ENCODE measurements at regions of chr3 and their contacts with region 1.

Region 1: DNA sequence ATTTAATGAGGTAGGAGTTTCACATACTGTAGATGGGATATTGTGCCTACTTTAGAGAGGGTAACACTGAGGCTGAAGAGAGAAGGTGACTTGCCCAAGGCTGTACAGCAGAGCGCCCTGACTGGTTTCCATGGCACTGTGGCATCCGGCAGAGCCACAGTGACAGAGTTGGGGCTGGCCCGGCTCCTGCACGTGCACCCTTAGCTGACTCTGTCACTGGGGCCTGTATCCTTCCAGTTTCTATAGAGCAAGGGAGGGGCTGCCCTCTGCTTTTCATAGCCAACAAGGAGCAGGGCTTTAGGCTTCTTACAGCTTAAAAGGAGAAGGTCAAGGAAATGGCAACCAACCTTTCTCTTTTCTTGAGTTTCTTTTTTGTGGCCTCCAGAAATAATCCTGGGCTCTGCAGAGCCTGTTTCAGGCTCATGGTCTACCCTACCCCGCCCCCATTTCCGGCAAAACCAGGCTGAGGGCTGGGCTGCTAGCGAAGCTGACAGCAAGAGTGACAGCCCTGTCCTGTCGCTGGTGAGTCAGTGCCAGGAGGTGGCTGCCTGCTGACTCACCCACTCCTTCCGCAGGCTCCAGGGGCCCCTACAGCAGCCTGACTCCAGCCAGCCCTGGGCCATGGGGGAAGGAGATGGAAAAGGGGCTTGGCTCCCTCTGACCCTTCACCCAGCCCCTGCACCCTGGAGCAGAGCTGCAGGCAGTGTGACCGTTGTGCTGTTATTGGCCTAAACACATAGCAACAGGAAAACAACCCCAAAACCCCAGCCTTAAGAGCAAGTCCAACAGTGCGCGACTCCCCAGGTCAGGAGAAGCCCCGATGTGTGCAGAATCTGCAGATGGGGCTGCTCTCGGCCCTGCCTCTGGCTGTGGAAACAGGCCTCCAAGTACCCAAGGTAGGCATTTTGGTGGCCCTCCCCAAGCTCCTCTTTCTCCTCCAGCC is 29.8 kb downstream of the SLC6A6 start:
- DNase-seq: peak; percentile 97
- H3K4me3 Mint-ChIP-seq: peak overlapping the region; percentile 77
- H3K27ac Mint-ChIP-seq: peak overlapping the region; percentile 92
- H3K4me1 Mint-ChIP-seq: peaks cover 80% of the 10 kb centered on the region
- H3K27me3 Mint-ChIP-seq: no peaks in the 10 kb centered on the region

Region 2: GRCh38 chr3:13012228-13012691 is 1419.9 kb before region 1 on chr3:
- CTCF ChIA-PET with region 1: no interaction called
- POLR2A ChIA-PET with region 1: no interaction called
- intact Hi-C with region 1: loop called (anchors 10 kb)
- DNase-seq: peak; percentile 83
- H3K4me3 Mint-ChIP-seq: peak overlapping the region; percentile 70
- H3K27ac Mint-ChIP-seq: peak overlapping the region; percentile 93
- H3K4me1 Mint-ChIP-seq: peaks cover 80% of the 10 kb centered on the region
- H3K27me3 Mint-ChIP-seq: no peaks in the 10 kb centered on the region

Region 3: GRCh38 chr3:13822042-13822441 is 610.1 kb before region 1 on chr3:
- CTCF ChIA-PET with region 1: no interaction called
- POLR2A ChIA-PET with region 1: no interaction called
- intact Hi-C with region 1: no loop called
- DNase-seq: peak; percentile 29
- H3K4me3 Mint-ChIP-seq: no peak overlapping the region
- H3K27ac Mint-ChIP-seq: peak overlapping the region; percentile 43
- H3K4me1 Mint-ChIP-seq: peaks cover 9% of the 10 kb centered on the region
- H3K27me3 Mint-ChIP-seq: no peaks in the 10 kb centered on the region

Region 4: GRCh38 chr3:14178247-14179113 is 253.7 kb before region 1 on chr3 and contains the starts of genes LSM3 and XPC:
- CTCF ChIA-PET with region 1: no interaction called
- POLR2A ChIA-PET with region 1: interaction called, 4 read pairs
- intact Hi-C with region 1: loop called (anchors 2 kb)
- DNase-seq: peak; percentile 98
- H3K4me3 Mint-ChIP-seq: peak within 1 kb of the TSS; percentile 87
- H3K27ac Mint-ChIP-seq: peak within 1 kb of the TSS; percentile 89
- H3K4me1 Mint-ChIP-seq: peaks cover 63% of the 10 kb centered on the region
- H3K27me3 Mint-ChIP-seq: no peaks in the 10 kb centered on the region
- total RNA-seq, gene LSM3: 22.1 to 22.9 TPM
- total RNA-seq, gene XPC: 27.8 to 31.6 TPM

Region 5: DNA sequence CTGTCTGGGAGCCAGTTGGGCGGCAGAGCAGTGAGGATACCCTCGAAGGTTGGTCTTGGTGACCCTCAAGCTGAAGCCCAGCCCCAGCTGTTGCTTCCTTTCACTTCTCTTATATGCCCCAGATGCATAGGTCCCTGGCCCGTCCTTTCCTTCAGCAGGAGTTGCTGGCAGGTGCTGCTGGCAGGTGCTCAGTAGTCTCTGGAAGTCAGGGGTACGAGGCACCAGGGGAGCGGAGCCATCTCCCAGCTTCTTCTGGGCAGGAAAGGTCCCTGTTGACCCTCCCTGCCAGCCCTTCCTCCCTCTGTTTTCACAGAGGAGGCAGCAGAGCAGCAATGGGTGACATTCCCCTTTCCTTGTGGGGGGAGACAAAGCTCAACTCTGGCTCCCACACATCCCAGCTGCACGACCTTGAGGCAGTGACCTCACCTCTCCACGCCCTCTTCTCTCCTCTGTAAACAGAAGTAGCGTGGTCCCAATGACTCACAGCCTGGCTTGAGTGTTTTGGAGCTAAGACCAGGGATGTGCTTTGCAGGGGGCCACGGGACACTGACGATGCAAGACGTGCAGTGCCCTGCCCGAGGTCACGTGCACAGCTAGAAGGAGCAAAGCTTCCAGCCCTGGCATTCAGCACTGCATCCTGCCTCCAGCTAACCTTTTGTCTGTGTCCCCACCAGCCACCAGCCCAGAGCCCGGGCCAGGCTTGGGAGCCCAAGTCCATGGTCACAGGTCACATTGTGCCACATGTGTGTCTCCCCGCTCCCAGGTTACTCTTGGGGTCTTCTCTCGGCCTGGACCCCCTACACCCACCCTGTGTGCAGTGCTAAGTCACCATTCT is 19.9 kb after region 1 on chr3:
- CTCF ChIA-PET with region 1: no interaction called
- POLR2A ChIA-PET with region 1: no interaction called
- intact Hi-C with region 1: loop called (anchors 2 kb)
- DNase-seq: no peak
- H3K4me3 Mint-ChIP-seq: no peak overlapping the region
- H3K27ac Mint-ChIP-seq: no peak overlapping the region
- H3K4me1 Mint-ChIP-seq: peaks cover 6% of the 10 kb centered on the region
- H3K27me3 Mint-ChIP-seq: no peaks in the 10 kb centered on the region

Region 6: DNA sequence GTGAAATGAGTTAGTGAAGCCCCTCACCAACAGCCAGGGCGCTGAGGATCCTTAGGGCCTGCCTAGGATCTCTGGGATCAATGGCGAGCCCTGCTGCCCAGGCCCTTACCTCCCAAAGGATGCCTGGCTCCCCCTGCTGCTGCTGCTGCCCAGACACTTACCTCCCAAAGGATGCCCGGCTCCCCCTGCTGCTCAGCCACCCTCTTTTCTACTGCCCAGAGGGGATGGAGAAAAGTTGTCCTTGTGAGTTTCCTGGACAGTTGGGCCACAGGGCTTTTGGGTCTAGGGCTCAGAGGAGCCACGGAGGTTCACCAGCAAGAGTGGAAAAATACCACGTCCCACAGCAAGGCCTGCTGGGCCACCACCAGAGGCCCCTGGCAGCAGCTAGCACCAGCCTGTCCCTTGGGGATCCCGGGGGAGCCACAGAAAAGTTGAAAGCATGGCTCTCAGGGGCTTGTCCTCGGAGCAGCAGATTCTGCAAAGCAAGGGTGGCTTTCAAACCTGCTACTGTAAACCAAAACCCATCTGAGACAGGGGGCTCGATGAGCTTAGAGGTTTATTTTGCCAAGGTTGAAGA is 29.7 kb after region 1 on chr3:
- CTCF ChIA-PET with region 1: interaction called, 9 read pairs
- POLR2A ChIA-PET with region 1: interaction called, 22 read pairs
- intact Hi-C with region 1: loop called (anchors 1 kb)
- DNase-seq: peak; percentile 58
- H3K4me3 Mint-ChIP-seq: no peak overlapping the region
- H3K27ac Mint-ChIP-seq: peak overlapping the region; percentile 65
- H3K4me1 Mint-ChIP-seq: peaks cover 35% of the 10 kb centered on the region
- H3K27me3 Mint-ChIP-seq: no peaks in the 10 kb centered on the region

Region 7: GRCh38 chr3:14651440-14652251 is 219.5 kb after region 1 on chr3 and contains the start of gene CCDC174:
- CTCF ChIA-PET with region 1: no interaction called
- POLR2A ChIA-PET with region 1: no interaction called
- intact Hi-C with region 1: loop called (anchors 1 kb)
- DNase-seq: peak; percentile 97
- H3K4me3 Mint-ChIP-seq: peak within 1 kb of the TSS; percentile 89
- H3K27ac Mint-ChIP-seq: peak within 1 kb of the TSS; percentile 98
- H3K4me1 Mint-ChIP-seq: peaks cover 35% of the 10 kb centered on the region
- H3K27me3 Mint-ChIP-seq: no peaks in the 10 kb centered on the region
- total RNA-seq, gene CCDC174: 16.6 to 18.6 TPM

Region 8: DNA sequence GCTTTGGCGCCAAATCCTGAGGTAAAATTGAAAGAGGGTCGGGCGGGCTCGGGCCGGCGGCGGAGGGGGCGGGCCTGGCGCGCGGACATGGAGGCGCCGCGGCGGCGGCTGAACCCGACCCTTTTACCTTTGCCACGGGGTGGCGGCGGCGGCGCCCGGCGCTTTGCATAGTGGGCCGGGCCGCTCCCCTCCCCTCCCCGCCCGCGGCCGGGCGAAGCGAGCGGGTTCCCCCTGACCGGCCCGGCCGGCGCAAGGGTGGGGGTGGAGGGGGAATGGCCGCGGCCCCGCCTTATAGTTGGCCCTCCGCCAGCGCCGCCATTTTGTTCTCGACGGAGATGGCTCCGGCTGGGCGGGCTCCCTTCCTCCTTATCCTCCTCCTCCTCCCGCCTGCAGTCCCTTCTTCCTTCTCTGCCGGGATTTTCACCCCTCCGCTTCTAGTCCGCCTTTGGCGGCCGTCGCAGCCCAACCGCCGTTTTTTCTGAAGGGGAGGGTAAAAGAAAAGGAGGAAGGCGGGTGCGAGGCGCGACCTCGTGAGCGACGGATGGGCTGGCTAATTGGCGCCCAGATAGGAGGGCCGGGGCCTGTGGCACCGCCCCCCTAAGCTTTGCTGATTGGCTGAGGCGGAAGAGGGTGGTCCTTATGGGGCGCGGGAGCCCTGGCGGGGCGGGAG is 515.9 kb after region 1 on chr3:
- CTCF ChIA-PET with region 1: no interaction called
- POLR2A ChIA-PET with region 1: no interaction called
- intact Hi-C with region 1: loop called (anchors 10 kb)
- DNase-seq: peak; percentile 97
- H3K4me3 Mint-ChIP-seq: peak overlapping the region; percentile 96
- H3K27ac Mint-ChIP-seq: peak overlapping the region; percentile 99
- H3K4me1 Mint-ChIP-seq: peaks cover 50% of the 10 kb centered on the region
- H3K27me3 Mint-ChIP-seq: no peaks in the 10 kb centered on the region